Aorta (tissue), 5 donors: ENCODE measurements at regions of chr1 and their contacts with region 1.

Region 1: GRCh38 chr1:205273551-205273982 is 45.8 kb downstream of the TMCC2 start:
- DNase-seq: peak; percentile 88 to 93
- ATAC-seq: peak; percentile 87
- H3K4me3 ChIP-seq: no peak overlapping the region
- H3K27ac ChIP-seq: no peak overlapping the region
- H3K4me1 ChIP-seq: peaks cover 0 to 2% of the 10 kb centered on the region in 2 donors
- H3K27me3 ChIP-seq: no peaks in the 10 kb centered on the region

Region 2: GRCh38 chr1:205325334-205325884 is 51.8 kb after region 1 on chr1:
- intact Hi-C with region 1: loop called (anchors 1 to 2 kb)
- DNase-seq: no peak
- ATAC-seq: peak; percentile 55
- H3K4me3 ChIP-seq: no peak overlapping the region
- H3K27ac ChIP-seq: no peak overlapping the region
- H3K4me1 ChIP-seq: no peaks in the 10 kb centered on the region
- H3K27me3 ChIP-seq: no peaks in the 10 kb centered on the region